GM12878 (cell line): ENCODE measurements at regions of chr10 and their contacts with region 1.

Region 1: DNA sequence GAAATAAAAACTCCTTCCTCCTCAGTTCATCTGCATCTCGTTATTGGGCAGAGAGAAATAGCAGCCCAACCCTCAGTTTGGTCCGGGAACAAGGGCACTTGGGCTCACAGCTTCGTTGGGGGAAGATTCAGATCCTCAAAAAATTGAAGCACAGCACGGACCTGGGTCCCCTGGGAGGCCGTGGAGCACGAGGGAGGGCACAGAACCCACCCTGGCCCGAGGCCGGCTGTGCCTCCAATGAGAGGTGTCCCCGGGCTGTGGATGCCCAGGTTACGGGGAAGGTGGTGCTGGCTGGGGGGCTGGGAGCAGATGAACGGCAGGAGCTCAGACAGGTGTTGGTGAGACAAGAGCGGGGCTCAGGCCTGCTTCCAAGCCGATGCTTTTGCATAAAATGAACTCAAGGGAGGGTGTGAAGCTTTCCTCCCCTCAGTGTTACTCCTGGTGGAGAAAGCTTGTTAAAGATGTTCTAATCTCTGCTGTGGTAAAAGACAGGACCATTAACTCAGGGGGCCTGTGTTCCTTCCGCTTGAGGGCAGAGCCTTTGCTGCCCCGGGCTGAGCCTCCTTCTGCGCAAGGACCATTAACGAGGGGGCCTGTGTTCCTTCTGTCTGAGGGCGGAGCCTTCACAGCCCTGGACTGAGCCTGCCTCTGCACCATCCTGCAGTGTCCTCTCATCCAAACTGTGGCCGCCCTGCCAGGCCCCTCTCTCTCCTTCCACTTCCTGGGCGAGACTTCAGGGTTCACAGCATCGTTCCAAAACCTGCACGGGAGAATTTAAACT is 302.2 kb downstream of the ADARB2 start:
- DNase-seq: no peak
- ATAC-seq: no peak
- H3K4me3 ChIP-seq: no peak overlapping the region
- H3K27ac ChIP-seq: no peak overlapping the region
- H3K4me1 ChIP-seq: no peaks in the 10 kb centered on the region
- H3K27me3 ChIP-seq: no peaks in the 10 kb centered on the region
- CTCF ChIP-seq: no peak
- EP300 ChIP-seq: no peak
- POLR2A ChIP-seq: no peak
- RAD21 ChIP-seq: no peak

Region 2: GRCh38 chr10:794466-794865 is 640.6 kb before region 1 on chr10:
- CTCF ChIA-PET with region 1: no interaction called
- POLR2A ChIA-PET with region 1: no interaction called
- RAD21 ChIA-PET with region 1: no interaction called
- SMC1A ChIA-PET with region 1: no interaction called
- in situ Hi-C with region 1: no loop called
- intact Hi-C with region 1: no loop called
- DNase-seq: no peak
- ATAC-seq: 0 out of 3 replicates have a peak, but pooled peaks have one; percentile 17
- H3K4me3 ChIP-seq: no peak overlapping the region
- H3K27ac ChIP-seq: no peak overlapping the region
- H3K4me1 ChIP-seq: no peaks in the 10 kb centered on the region
- H3K27me3 ChIP-seq: no peaks in the 10 kb centered on the region
- CTCF ChIP-seq: peak in 2 of 3 experiments; percentile 28 to 38; a peak in 3 of 6 replicates
- EP300 ChIP-seq: no peak
- POLR2A ChIP-seq: no peak
- RAD21 ChIP-seq: peak; percentile 38

Region 3: DNA sequence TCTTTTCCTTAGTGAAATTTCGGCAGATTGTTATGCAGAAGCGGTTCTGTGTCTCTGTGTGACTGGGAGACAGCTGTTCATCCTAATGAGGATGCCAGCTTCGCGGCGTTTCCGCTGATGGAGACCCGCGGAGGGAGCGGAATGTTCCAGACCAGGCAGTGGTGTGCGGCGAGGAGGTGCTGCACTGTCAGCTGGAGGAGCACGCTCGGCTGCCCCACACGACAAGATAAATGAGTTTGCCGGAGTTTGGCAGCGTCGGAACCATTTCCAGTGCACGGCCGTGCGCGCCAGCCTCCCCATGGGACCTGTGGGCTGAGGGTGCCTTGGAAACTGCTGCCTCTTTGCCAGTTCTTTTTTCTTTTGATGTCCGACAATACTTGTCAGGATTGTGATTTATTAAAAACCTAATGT is 314.3 kb before region 1 on chr10:
- CTCF ChIA-PET with region 1: no interaction called
- POLR2A ChIA-PET with region 1: no interaction called
- RAD21 ChIA-PET with region 1: no interaction called
- SMC1A ChIA-PET with region 1: no interaction called
- in situ Hi-C with region 1: no loop called
- intact Hi-C with region 1: no loop called
- DNase-seq: no peak
- ATAC-seq: no peak
- H3K4me3 ChIP-seq: no peak overlapping the region
- H3K27ac ChIP-seq: no peak overlapping the region
- H3K4me1 ChIP-seq: no peaks in the 10 kb centered on the region
- H3K27me3 ChIP-seq: no peaks in the 10 kb centered on the region
- CTCF ChIP-seq: no peak
- EP300 ChIP-seq: no peak
- POLR2A ChIP-seq: no peak
- RAD21 ChIP-seq: no peak

Region 4: GRCh38 chr10:1448252-1448929 is 13.3 kb after region 1 on chr10:
- CTCF ChIA-PET with region 1: interaction called, 4 read pairs
- POLR2A ChIA-PET with region 1: interaction called, 5 read pairs
- RAD21 ChIA-PET with region 1: interaction called, 3 read pairs
- SMC1A ChIA-PET with region 1: interaction called, 22 read pairs
- in situ Hi-C with region 1: no loop called
- intact Hi-C with region 1: no loop called
- DNase-seq: no peak
- ATAC-seq: no peak
- H3K4me3 ChIP-seq: no peak overlapping the region
- H3K27ac ChIP-seq: no peak overlapping the region
- H3K4me1 ChIP-seq: no peaks in the 10 kb centered on the region
- H3K27me3 ChIP-seq: no peaks in the 10 kb centered on the region
- CTCF ChIP-seq: no peak
- EP300 ChIP-seq: no peak
- POLR2A ChIP-seq: no peak
- RAD21 ChIP-seq: no peak

Region 5: GRCh38 chr10:1488969-1489548 is 54.0 kb after region 1 on chr10:
- CTCF ChIA-PET with region 1: no interaction called
- POLR2A ChIA-PET with region 1: no interaction called
- RAD21 ChIA-PET with region 1: no interaction called
- SMC1A ChIA-PET with region 1: no interaction called
- in situ Hi-C with region 1: loop called (anchors 5 kb)
- intact Hi-C with region 1: no loop called
- DNase-seq: peak; percentile 65
- ATAC-seq: peak; percentile 96
- H3K4me3 ChIP-seq: peak overlapping the region; percentile 23; the same call in 1 of the 2 replicates
- H3K27ac ChIP-seq: peak overlapping the region; percentile 32; the same call in 1 of the 2 replicates
- H3K4me1 ChIP-seq: peaks cover 8% of the 10 kb centered on the region
- H3K27me3 ChIP-seq: no peaks in the 10 kb centered on the region
- CTCF ChIP-seq: no peak; a peak in 1 of 6 replicates
- EP300 ChIP-seq: 0 out of 4 replicates have a peak, but pooled peaks of 1 of the 2 experiments have one; percentile 2
- POLR2A ChIP-seq: peak; percentile 57
- RAD21 ChIP-seq: no peak